A549 (cell line): ENCODE measurements at regions of chr5 and their contacts with region 1.

Region 1: DNA sequence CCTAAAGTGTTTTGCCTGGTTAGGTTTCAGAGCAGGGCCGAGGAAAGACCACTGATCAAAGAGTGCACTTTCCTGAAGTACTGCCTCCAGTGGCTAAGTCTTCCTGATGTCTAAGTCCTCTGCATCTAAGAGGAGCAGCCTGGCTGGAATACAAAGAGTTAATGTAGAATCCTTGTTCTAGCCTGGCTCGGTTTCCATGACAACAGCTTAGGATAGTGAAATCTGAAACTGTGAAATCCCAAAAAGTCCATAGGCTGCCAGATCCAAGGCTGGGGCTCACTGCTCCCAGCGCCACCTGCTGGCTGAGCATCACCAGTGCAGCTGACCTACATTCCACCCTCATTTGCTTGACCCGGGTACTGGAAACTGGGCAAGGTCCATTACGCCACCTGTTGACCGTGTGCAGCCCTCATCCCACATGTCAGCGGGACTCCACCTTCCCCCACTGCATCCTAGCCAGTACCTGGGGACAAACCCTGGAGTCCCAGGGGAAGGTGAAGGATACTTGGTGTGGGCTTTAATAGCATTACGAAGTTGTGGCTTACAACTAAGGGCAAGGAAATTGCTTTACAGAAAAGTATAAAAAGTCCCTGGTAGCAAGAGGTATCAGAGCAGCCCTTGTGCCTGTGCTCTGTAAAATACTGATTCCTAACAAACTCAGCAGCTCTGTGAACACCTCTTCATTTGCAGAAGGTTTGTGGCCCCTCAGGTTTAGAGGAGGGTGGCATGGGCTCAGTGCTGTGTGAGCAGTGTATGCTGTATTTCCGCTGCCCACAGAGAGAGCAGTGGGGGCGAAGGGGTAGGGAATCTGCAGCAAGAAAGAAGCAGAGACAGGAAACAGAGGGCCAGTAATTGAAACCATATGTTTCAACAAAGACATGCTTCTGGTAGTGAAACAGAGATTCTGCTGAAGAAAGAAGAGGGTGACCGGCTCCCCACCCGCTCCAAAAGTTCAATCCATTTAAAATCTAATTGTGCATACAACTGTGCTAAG is 36.0 kb downstream of the PCDHGC5 start:
- DNase-seq: peak; percentile 89 to 92
- ATAC-seq: peak; percentile 92 to 95
- H3K4me3 ChIP-seq: no peak overlapping the region
- H3K27ac ChIP-seq: no peak overlapping the region
- H3K4me1 ChIP-seq: peaks cover 36% of the 10 kb centered on the region
- CTCF ChIP-seq: peak; percentile 99
- EP300 ChIP-seq: no peak
- POLR2A ChIP-seq: no peak
- RAD21 ChIP-seq: peak; percentile 82 to 84

Region 2: DNA sequence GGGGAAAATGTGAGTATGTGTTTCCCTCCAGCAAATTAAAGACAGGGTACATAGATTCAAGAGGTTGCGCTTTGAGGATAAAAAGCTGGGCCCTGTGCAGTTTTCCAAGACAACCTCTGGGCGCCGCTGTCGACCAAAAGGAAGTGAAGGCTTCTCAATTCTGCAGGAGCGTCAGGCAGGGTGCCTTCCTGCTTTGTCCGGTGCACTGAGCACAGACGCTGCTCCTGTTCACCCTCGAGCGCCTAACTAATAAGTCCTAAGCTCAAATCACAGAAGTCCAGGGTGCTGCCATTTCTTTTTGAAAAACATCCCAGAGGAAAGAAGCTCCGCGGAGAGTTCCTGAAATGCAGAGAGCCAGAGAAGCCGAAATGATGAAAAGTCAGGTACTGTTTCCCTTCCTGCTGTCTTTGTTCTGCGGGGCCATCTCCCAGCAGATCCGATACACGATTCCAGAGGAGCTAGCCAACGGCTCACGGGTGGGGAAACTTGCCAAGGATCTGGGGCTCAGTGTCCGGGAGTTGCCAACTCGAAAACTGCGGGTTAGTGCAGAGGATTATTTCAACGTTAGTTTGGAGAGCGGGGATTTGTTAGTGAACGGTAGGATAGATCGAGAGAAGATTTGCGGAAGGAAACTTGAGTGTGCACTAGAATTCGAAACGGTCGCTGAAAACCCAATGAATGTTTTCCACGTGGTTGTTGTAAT is 174.8 kb before region 1 on chr5 and contains the start of gene PCDHGB1:
- CTCF ChIA-PET with region 1: interaction called, 11 read pairs
- POLR2A ChIA-PET with region 1: no interaction called
- DNase-seq: peak; percentile 80 to 87
- ATAC-seq: peak; percentile 99
- H3K4me3 ChIP-seq: peak within 1 kb of the TSS; percentile 45
- H3K27ac ChIP-seq: peak within 1 kb of the TSS; percentile 24 to 73; a peak in 5 of 6 replicates
- H3K4me1 ChIP-seq: no peaks in the 10 kb centered on the region
- CTCF ChIP-seq: peak; percentile 75
- EP300 ChIP-seq: no peak
- POLR2A ChIP-seq: peak; percentile 28
- RAD21 ChIP-seq: peak; percentile 71 to 73
- polyA plus RNA-seq, gene PCDHGB1: 3.7 and 3.9 TPM in 2 replicates

Region 3: GRCh38 chr5:141387233-141387949 is 137.5 kb before region 1 on chr5 and contains the start of gene PCDHGB4:
- CTCF ChIA-PET with region 1: interaction called, 17 read pairs
- POLR2A ChIA-PET with region 1: no interaction called
- DNase-seq: peak in 1 of 2 experiments; percentile 42
- ATAC-seq: peak; percentile 63 to 64
- H3K4me3 ChIP-seq: no peak within 1 kb of the TSS
- H3K27ac ChIP-seq: no peak within 1 kb of the TSS
- H3K4me1 ChIP-seq: no peaks in the 10 kb centered on the region
- CTCF ChIP-seq: peak; percentile 13; the same call in 1 of the 3 replicates
- EP300 ChIP-seq: no peak
- POLR2A ChIP-seq: no peak
- RAD21 ChIP-seq: peak; percentile 26 to 31; a peak in 2 of 5 replicates
- polyA plus RNA-seq, gene PCDHGB4: 1.4 and 1.5 TPM in 2 replicates

Region 4: GRCh38 chr5:141412854-141413539 is 111.9 kb before region 1 on chr5 and contains the start of gene PCDHGA10:
- CTCF ChIA-PET with region 1: interaction called, 13 read pairs
- POLR2A ChIA-PET with region 1: no interaction called
- DNase-seq: no peak
- ATAC-seq: no peak
- H3K4me3 ChIP-seq: no peak within 1 kb of the TSS
- H3K27ac ChIP-seq: no peak within 1 kb of the TSS
- H3K4me1 ChIP-seq: no peaks in the 10 kb centered on the region
- CTCF ChIP-seq: no peak
- EP300 ChIP-seq: no peak
- POLR2A ChIP-seq: no peak
- RAD21 ChIP-seq: peak in 1 of 2 experiments; percentile 13; a peak in 1 of 5 replicates
- polyA plus RNA-seq, gene PCDHGA10: 0.04 and 0.08 TPM in 2 replicates

Region 5: GRCh38 chr5:141492168-141492885 is 32.6 kb before region 1 on chr5:
- CTCF ChIA-PET with region 1: interaction called, 15 read pairs
- POLR2A ChIA-PET with region 1: no interaction called
- DNase-seq: no peak
- ATAC-seq: no peak
- H3K4me3 ChIP-seq: no peak overlapping the region
- H3K27ac ChIP-seq: no peak overlapping the region
- H3K4me1 ChIP-seq: no peaks in the 10 kb centered on the region
- CTCF ChIP-seq: no peak
- EP300 ChIP-seq: no peak
- POLR2A ChIP-seq: no peak
- RAD21 ChIP-seq: no peak

Region 6: GRCh38 chr5:141657937-141658545 is 133.1 kb after region 1 on chr5:
- CTCF ChIA-PET with region 1: no interaction called
- POLR2A ChIA-PET with region 1: no interaction called
- DNase-seq: peak; percentile 63 to 70
- ATAC-seq: peak; percentile 32 to 44; a peak in 3 of 6 replicates
- H3K4me3 ChIP-seq: no peak overlapping the region
- H3K27ac ChIP-seq: no peak overlapping the region
- H3K4me1 ChIP-seq: peaks cover 9% of the 10 kb centered on the region
- CTCF ChIP-seq: no peak
- EP300 ChIP-seq: no peak
- POLR2A ChIP-seq: no peak
- RAD21 ChIP-seq: no peak